ENCODE measurements at regions of chr10 and their contacts with region 1.

Region 1: DNA sequence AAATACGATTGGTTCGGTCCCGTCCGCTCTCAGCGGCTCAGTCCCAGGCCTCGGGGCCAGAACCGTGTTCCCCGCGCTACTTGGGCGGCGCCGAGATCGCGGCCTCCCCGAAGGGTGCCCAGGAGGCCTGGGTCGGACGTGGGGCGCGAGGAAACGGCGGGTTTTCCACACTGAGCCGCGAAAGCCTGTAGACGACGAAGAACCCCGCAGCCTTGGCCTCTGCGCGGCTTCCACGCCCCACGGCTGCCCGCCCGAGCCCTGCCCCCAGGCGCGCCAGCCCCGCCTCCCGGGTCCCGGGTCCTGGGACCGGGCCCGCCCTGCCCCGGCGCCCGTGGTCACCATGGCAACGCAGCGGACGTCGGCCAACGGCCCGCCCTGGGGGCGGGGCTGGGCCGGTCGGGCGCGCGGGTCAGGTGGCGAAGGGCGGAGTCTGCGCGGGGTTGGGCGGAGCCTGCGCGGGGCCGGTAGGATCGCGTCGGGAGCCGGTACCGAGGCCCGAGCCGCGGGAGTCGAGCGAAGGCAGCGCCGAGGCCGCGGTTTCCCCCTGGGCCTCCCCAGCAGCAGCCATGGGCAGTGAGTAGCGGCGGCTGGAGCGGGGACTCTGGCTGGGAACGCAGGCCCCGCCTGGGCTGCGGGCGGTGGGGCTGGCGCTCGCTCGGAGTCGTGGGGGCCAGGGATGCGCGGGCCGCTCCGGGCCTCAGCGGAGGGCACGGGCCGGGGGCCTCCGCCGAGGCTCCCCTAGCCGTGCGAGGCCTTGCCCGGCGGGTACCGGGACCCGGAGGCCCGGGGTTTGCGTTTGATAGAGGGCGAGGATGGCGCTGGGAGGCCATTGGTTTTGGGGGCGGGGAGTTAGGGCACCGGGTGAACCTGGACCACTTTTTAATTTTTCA is at the start of gene SEC61A2:
- DNase-seq: peak; percentile 61
- H3K4me3 ChIP-seq: peak within 1 kb of the TSS; percentile 62 to 100 (median 96)
- H3K27ac ChIP-seq: peak within 1 kb of the TSS; percentile 89 to 97 (median 93)
- H3K4me1 ChIP-seq: peaks cover 0 to 21% (median 13%) of the 10 kb centered on the region in 3 donors
- H3K27me3 ChIP-seq: no peaks in the 10 kb centered on the region
- CTCF ChIP-seq: no peak
- POLR2A ChIP-seq: peak in 3 of 4 donors; percentile 18 to 69 (median 56)
- total RNA-seq, gene SEC61A2: 1.2 to 5.0 (median 4.3) TPM

Region 2: DNA sequence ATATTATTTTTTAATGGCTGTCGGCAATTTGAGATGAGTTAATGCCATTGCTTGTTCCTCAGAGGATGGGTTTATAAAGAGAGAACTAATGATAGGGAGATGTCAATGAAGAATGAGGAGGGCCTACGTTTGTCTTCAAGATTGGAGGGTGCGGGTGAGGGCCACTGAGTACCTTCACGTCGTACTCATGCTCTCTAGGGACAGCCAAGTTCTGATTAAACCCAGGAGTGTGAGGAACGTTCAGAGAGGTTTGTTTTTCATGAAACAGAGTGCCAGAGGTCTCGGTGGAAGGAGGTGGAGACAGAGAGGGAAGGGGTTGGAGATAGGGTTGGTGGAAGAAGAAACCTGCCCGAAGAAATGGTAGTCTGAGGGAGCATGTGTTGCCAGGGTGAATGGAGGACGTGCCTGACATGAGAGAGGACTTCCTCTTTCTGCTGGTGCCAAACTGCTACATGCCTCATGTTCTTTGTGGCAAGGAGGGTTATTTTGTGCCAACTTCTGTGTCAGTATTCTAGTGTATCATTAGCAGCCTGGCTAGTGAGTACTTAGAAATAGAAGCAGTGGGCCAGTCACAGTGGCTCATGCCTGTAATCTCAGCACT is 51.8 kb before region 1 on chr10:
- intact Hi-C with region 1: loop called (anchors 10 kb)
- DNase-seq: no peak
- H3K4me3 ChIP-seq: no peak overlapping the region
- H3K27ac ChIP-seq: no peak overlapping the region
- H3K4me1 ChIP-seq: no peaks in the 10 kb centered on the region
- H3K27me3 ChIP-seq: no peaks in the 10 kb centered on the region
- CTCF ChIP-seq: no peak
- POLR2A ChIP-seq: no peak